Prostate gland (tissue), 2 donors: ENCODE measurements at regions of chr6 and their contacts with region 1.

Region 1: GRCh38 chr6:5205877-5206850 is 54.6 kb downstream of the LYRM4 start:
- DNase-seq: no peak
- H3K4me3 ChIP-seq: no peak overlapping the region
- H3K27ac ChIP-seq: no peak overlapping the region
- H3K4me1 ChIP-seq: no peaks in the 10 kb centered on the region
- H3K27me3 ChIP-seq: no peaks in the 10 kb centered on the region
- CTCF ChIP-seq: no peak
- POLR2A ChIP-seq: no peak

Region 2: DNA sequence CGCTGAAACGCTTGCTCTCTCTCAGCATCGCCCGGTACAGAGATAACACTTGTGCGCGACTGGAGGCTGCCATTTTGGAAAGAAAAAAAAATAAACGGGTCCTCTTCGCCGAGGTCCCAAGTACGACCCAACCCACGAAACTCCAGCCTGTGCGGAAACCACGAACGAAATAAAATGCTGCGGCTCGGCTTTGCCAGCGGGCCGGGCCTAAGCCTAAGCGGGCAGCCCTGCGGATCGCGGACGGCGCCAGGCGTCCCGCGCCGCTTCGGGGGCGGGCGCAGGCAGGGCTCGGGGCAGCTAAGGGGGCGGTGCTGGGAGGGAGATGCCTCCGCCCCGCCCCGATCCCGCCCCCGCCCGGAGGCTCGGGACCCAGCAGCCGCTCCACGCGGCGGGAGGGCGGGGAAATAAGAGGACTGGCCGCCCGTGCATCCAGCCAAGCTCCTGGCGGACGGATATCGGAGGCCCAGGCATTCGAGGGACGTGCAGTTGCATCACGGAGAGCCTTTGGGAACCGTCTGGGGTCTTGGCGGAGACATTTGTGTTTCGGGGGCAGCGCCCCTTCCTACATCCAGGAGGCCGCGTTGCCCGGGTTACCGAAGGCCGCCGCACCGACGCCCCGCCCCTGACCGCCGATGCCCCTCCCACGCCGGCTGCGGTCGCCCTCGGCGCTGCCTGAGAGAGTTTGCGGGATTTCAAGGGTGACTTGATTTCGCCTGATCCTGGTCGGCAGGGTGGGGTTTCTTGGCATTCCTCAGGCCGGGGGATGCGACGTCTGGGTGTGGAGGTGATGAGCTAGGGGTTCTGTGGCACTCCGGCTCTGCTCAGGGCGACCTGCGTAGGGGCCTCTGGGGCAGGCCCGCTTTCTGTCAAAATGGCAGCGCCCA is 54.7 kb after region 1 on chr6 and contains the starts of genes FARS2 and LYRM4:
- intact Hi-C with region 1: loop called (anchors 2 kb)
- DNase-seq: peak; percentile 85
- H3K4me3 ChIP-seq: peak within 1 kb of the TSS; percentile 84 to 88
- H3K27ac ChIP-seq: peak within 1 kb of the TSS; percentile 94 to 95
- H3K4me1 ChIP-seq: no peaks in the 10 kb centered on the region
- H3K27me3 ChIP-seq: no peaks in the 10 kb centered on the region
- CTCF ChIP-seq: peak in 2 of 4 experiments; percentile 65 to 66
- POLR2A ChIP-seq: peak; percentile 45
- total RNA-seq, gene FARS2: 11.6 to 19.5 TPM
- total RNA-seq, gene LYRM4: 21.4 to 23.7 TPM

Region 3: GRCh38 chr6:6039946-6040509 is 833.9 kb after region 1 on chr6:
- intact Hi-C with region 1: no loop called
- DNase-seq: no peak
- H3K4me3 ChIP-seq: no peak overlapping the region
- H3K27ac ChIP-seq: no peak overlapping the region
- H3K4me1 ChIP-seq: no peaks in the 10 kb centered on the region
- H3K27me3 ChIP-seq: no peaks in the 10 kb centered on the region
- CTCF ChIP-seq: no peak
- POLR2A ChIP-seq: no peak